ENCODE measurements at regions of chr6 and their contacts with region 1.

Region 1: DNA sequence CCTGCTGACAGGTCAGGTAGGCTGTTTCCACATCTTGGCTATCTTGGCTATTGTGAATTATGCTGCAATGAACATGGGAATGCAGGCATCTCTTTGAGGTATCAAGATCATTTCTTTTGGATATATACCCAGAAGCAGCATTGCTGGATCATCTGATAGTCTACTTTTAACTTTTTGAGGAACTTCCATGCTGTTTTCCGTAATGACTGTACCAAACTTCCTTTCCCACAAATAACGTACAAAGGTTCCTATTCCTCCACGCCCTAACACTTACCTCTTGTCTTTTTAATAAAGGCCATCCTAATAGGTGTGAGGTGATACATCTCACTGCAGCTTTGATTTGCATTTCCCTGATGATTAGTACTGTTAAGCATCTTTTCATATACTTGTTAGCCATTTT is 338.7 kb upstream of the RUNX2 start:
- DNase-seq: no peak
- H3K4me3 Mint-ChIP-seq: no peak overlapping the region
- H3K27ac Mint-ChIP-seq: no peak overlapping the region
- H3K4me1 Mint-ChIP-seq: no peaks in the 10 kb centered on the region
- H3K27me3 Mint-ChIP-seq: no peaks in the 10 kb centered on the region

Region 2: GRCh38 chr6:44942217-44942616 is 47.2 kb before region 1 on chr6:
- intact Hi-C with region 1: loop called (anchors 1 kb)
- DNase-seq: no peak
- H3K4me3 Mint-ChIP-seq: no peak overlapping the region
- H3K27ac Mint-ChIP-seq: no peak overlapping the region
- H3K4me1 Mint-ChIP-seq: peaks cover 34% of the 10 kb centered on the region
- H3K27me3 Mint-ChIP-seq: peaks cover 3% of the 10 kb centered on the region

Region 3: GRCh38 chr6:45009576-45009975 is 20.2 kb after region 1 on chr6:
- intact Hi-C with region 1: no loop called
- DNase-seq: no peak
- H3K4me3 Mint-ChIP-seq: no peak overlapping the region
- H3K27ac Mint-ChIP-seq: peak overlapping the region; percentile 67
- H3K4me1 Mint-ChIP-seq: peaks cover 30% of the 10 kb centered on the region
- H3K27me3 Mint-ChIP-seq: no peaks in the 10 kb centered on the region

Measured in activated T-helper 1 cell treated with anti-CD3 and anti-CD28 coated beads, Interleukin-12 subunit alpha, Interleukin-12 subunit beta, Interleukin-2, Interleukin-4 antibody, amounts not matched to agents 30 ng/mL and 10 ng/mL and 1 ng/mL, durations not matched to agents 14 hours and 24 hours and 36 hours (primary cell).